Psoas muscle (tissue), 8 donors: ENCODE measurements at regions of chr12 and their contacts with region 1.

Region 1: GRCh38 chr12:94615284-94616181 is 34.8 kb downstream of the TMCC3 start:
- DNase-seq: peak; percentile 69 to 89
- ATAC-seq: peak; percentile 73 to 80 (median 76)
- H3K4me3 ChIP-seq: peak overlapping the region; percentile 56
- H3K27ac ChIP-seq: peak overlapping the region; percentile 89
- H3K4me1 ChIP-seq: peaks cover 58% of the 10 kb centered on the region
- H3K27me3 ChIP-seq: no peaks in the 10 kb centered on the region
- CTCF ChIP-seq: no peak

Region 2: GRCh38 chr12:94644141-94644979 is 28.8 kb after region 1 on chr12:
- intact Hi-C with region 1: loop called in 1 of 2 experiments (anchors 2 kb)
- DNase-seq: peak; percentile 31 to 58
- ATAC-seq: peak; percentile 90 to 94 (median 92)
- H3K4me3 ChIP-seq: peak overlapping the region; percentile 48
- H3K27ac ChIP-seq: peak overlapping the region; percentile 98
- H3K4me1 ChIP-seq: peaks cover 56% of the 10 kb centered on the region
- H3K27me3 ChIP-seq: no peaks in the 10 kb centered on the region
- CTCF ChIP-seq: no peak

Region 3: GRCh38 chr12:94649349-94650142 is 34.0 kb after region 1 on chr12:
- intact Hi-C with region 1: loop called (anchors 2 to 5 kb)
- DNase-seq: peak; percentile 64 to 79
- ATAC-seq: peak; percentile 63 to 73 (median 72)
- H3K4me3 ChIP-seq: peak overlapping the region; percentile 94
- H3K27ac ChIP-seq: peak overlapping the region; percentile 98
- H3K4me1 ChIP-seq: peaks cover 39% of the 10 kb centered on the region
- H3K27me3 ChIP-seq: no peaks in the 10 kb centered on the region
- CTCF ChIP-seq: peak; percentile 47